ENCODE measurements at regions of chr6 and their contacts with region 1.

Region 1: DNA sequence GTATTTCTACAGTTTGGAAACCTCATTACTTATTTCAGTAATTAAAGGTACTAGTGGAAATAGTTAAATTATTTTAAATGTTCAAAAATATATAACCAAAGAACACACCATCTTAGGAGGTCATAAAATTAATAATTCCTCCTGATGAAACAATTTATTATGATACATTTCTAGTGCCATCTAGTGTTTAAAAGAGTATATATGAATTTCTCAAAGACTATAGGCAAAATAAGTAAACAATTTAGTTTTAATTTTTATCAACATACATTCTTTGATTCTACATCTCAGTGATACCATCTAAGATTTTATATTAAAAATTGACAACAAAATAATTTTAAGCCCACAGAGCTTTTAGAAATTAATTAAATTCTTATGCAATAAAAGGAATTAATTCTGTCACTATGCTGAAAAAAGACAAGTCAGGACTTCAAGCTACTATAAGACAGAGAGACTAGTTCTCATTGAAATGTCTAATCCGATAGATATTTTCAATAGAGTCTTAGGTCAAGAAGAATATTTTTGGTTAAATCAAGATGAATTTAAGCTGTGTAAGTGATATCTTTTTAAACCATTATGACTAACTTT is 107.8 kb upstream of the RNF217 start:
- DNase-seq: no peak
- ATAC-seq: no peak
- H3K4me3 ChIP-seq: no peak overlapping the region
- H3K27ac ChIP-seq: peak overlapping the region; percentile 26; the same call in 1 of the 2 replicates
- H3K4me1 ChIP-seq: no peaks in the 10 kb centered on the region
- H3K27me3 ChIP-seq: no peaks in the 10 kb centered on the region
- CTCF ChIP-seq: peak; percentile 13; the same call in 1 of the 2 replicates

Region 2: GRCh38 chr6:123415844-123416468 is 1438.5 kb before region 1 on chr6:
- CTCF ChIA-PET with region 1: no interaction called
- POLR2A ChIA-PET with region 1: no interaction called
- in situ Hi-C with region 1: no loop called
- intact Hi-C with region 1: loop called (anchors 10 kb)
- DNase-seq: peak; percentile 33
- ATAC-seq: peak; percentile 70
- H3K4me3 ChIP-seq: no peak overlapping the region
- H3K27ac ChIP-seq: no peak overlapping the region
- H3K4me1 ChIP-seq: no peaks in the 10 kb centered on the region
- H3K27me3 ChIP-seq: peaks cover 2% of the 10 kb centered on the region; the same call in 1 of the 2 replicates
- CTCF ChIP-seq: peak; percentile 79

Region 3: DNA sequence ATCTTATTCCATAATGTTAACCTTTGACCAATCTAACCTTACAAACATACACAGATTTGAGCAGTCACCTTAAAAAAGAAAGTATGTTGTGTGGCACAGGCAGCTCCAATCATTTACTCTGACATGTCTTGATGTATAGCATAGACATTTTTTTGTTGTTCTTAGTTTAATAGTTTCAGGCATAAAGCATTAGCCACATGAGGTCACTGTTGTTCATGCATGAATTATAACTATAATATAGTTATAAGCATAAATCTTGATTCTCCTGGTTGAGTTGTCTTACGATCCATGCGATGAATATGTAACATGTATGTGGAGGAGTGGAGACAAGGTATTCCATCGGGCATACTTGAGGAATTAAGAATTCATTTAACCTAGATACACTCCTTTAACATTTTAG is 1076.9 kb before region 1 on chr6:
- CTCF ChIA-PET with region 1: no interaction called
- POLR2A ChIA-PET with region 1: no interaction called
- in situ Hi-C with region 1: no loop called
- intact Hi-C with region 1: loop called (anchors 5 kb)
- DNase-seq: peak; percentile 18
- ATAC-seq: peak; percentile 84
- H3K4me3 ChIP-seq: no peak overlapping the region
- H3K27ac ChIP-seq: peak overlapping the region; percentile 63; the same call in 1 of the 2 replicates
- H3K4me1 ChIP-seq: peaks cover 7% of the 10 kb centered on the region; the same call in 1 of the 2 replicates
- H3K27me3 ChIP-seq: no peaks in the 10 kb centered on the region
- CTCF ChIP-seq: peak; percentile 70; the same call in 1 of the 2 replicates

Region 4: GRCh38 chr6:123802697-123803496 is 1051.5 kb before region 1 on chr6:
- CTCF ChIA-PET with region 1: interaction called, 3 read pairs
- POLR2A ChIA-PET with region 1: no interaction called
- in situ Hi-C with region 1: no loop called
- intact Hi-C with region 1: loop called (anchors 10 kb)
- DNase-seq: peak; percentile 65
- ATAC-seq: peak; percentile 91
- H3K4me3 ChIP-seq: peak overlapping the region; percentile 79
- H3K27ac ChIP-seq: peak overlapping the region; percentile 87
- H3K4me1 ChIP-seq: peaks cover 26% of the 10 kb centered on the region
- H3K27me3 ChIP-seq: no peaks in the 10 kb centered on the region
- CTCF ChIP-seq: peak; percentile 98

Region 5: GRCh38 chr6:124661097-124661661 is 193.3 kb before region 1 on chr6:
- CTCF ChIA-PET with region 1: no interaction called
- POLR2A ChIA-PET with region 1: no interaction called
- in situ Hi-C with region 1: no loop called
- intact Hi-C with region 1: no loop called
- DNase-seq: no peak
- ATAC-seq: no peak; the same call in 1 of the 2 replicates
- H3K4me3 ChIP-seq: no peak overlapping the region
- H3K27ac ChIP-seq: peak overlapping the region; percentile 64
- H3K4me1 ChIP-seq: peaks cover 11% of the 10 kb centered on the region
- H3K27me3 ChIP-seq: no peaks in the 10 kb centered on the region
- CTCF ChIP-seq: no peak

Region 6: DNA sequence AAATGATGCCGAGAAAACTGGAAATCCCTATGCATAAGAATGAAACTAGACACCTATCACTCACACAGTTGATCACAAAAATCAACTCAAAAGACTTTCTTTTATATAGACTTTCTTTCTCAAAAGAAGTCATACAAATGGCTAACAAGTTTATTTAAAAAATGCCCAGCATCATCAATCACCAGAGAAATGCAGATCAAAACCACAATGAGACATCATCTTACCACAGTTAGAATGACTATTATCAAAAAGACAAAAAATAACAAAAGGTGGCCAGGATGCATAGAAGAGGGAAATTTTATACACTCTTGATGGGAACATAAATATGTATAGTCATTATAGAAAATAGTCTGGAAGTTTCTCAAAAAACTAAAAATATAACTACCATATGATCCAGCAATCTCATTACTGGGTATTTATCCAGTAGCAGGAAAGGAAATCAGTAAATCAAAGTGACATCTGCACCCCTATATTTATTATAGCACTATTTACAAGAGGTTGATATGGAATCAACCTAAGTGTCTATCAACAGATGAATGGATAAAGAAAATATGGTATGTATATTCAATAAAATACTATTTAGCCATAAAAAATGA is 104.4 kb after region 1 on chr6:
- CTCF ChIA-PET with region 1: no interaction called
- POLR2A ChIA-PET with region 1: no interaction called
- in situ Hi-C with region 1: no loop called
- intact Hi-C with region 1: no loop called
- DNase-seq: no peak
- ATAC-seq: no peak
- H3K4me3 ChIP-seq: no peak overlapping the region
- H3K27ac ChIP-seq: no peak overlapping the region
- H3K4me1 ChIP-seq: peaks cover 13% of the 10 kb centered on the region
- H3K27me3 ChIP-seq: no peaks in the 10 kb centered on the region
- CTCF ChIP-seq: no peak